GM10248 (cell line): ENCODE measurements at regions of chr6 and their contacts with region 1.

Region 1: DNA sequence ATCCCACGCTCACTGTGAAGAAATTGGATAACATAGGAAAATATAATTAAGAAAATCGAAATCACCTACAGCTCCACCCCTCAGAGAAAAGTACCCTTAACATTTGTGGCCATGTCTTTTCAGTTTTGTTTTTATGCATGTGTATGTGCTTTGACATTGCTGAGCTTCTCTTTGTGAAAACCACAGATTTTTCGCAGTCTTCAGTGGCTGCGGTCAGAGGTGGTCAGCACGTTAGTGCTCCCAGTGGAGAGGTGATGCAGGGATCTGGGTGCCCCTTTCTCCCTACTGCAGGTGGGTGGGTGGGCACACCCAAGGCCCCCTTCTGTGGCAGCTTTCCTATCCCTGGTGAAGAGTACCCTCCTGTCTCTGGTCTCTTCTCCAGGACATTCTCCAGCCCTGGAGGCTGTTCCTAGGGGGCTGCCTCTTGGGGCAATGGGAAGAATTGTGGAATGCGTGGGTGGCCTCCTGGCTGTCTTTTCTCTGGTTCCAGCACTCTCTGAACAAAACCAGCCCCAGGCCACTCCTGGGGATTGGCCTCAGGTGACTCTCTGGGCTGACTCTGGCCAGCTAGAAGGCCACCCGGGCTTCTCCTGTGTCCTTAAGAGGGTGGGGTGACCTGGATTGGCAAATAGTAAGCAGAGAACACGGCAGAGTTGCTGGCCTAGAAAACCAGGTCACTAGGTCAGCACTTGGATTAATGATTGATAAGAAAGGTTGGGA is 49.8 kb upstream of the FANCE start:
- DNase-seq: peak; percentile 53
- CTCF ChIP-seq: no peak

Region 2: DNA sequence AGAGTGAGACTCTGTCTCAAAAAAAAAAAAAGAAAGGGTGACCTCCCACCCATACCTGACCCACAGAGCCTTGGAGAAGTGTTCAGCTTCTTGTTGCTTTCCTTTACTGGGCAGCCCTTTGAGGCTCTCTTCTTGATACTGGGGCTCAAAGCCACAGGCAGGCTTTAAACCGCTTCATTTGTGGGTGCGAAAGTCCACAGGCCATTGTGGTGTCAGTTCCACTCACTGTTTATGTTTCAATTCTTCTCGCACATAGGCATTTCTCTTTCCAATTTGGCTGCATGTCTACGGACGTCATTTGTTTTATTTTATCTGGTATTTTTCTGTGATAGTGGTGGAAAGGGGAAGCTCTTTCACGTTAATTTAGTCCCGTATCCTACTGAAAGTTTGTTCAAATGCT is 25.3 kb before region 1 on chr6:
- CTCF ChIA-PET with region 1: interaction called, 10 read pairs
- POLR2A ChIA-PET with region 1: no interaction called
- DNase-seq: no peak
- CTCF ChIP-seq: no peak